ENCODE measurements at regions of chr3 and their contacts with region 1.

Region 1: GRCh38 chr3:53773611-53774368 is 72.4 kb downstream of the CHDH start:
- DNase-seq: peak in 1 of 2 donors; percentile 76
- H3K4me3 ChIP-seq: no peak overlapping the region
- H3K27ac ChIP-seq: peak overlapping the region in 1 of 2 donors; percentile 28
- H3K4me1 ChIP-seq: peaks cover 3 to 23% of the 10 kb centered on the region in 2 donors
- H3K27me3 ChIP-seq: no peaks in the 10 kb centered on the region
- CTCF ChIP-seq: no peak

Region 2: DNA sequence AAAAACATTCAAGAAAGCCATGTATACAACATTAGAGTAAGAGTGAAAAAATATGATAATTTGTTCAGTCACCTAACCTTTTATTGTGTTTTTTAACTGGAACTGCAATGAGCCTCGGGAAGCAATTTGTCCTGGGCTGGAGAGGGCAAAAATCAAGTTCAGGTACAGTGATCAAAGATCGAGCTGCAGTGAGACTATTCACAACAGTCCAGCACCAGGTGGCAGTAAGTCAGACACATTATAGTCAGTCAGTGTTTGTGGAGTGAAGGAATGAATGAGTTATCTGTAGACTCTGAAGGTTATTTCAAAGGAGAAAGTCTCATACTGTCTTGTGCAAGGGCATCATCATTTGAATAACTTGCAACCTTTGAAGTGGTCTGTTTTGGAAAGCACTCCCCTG is 44.2 kb before region 1 on chr3:
- intact Hi-C with region 1: no loop called
- DNase-seq: no peak
- H3K4me3 ChIP-seq: no peak overlapping the region
- H3K27ac ChIP-seq: no peak overlapping the region
- H3K4me1 ChIP-seq: peaks cover 0 to 6% of the 10 kb centered on the region in 2 donors
- H3K27me3 ChIP-seq: no peaks in the 10 kb centered on the region
- CTCF ChIP-seq: no peak

Region 3: DNA sequence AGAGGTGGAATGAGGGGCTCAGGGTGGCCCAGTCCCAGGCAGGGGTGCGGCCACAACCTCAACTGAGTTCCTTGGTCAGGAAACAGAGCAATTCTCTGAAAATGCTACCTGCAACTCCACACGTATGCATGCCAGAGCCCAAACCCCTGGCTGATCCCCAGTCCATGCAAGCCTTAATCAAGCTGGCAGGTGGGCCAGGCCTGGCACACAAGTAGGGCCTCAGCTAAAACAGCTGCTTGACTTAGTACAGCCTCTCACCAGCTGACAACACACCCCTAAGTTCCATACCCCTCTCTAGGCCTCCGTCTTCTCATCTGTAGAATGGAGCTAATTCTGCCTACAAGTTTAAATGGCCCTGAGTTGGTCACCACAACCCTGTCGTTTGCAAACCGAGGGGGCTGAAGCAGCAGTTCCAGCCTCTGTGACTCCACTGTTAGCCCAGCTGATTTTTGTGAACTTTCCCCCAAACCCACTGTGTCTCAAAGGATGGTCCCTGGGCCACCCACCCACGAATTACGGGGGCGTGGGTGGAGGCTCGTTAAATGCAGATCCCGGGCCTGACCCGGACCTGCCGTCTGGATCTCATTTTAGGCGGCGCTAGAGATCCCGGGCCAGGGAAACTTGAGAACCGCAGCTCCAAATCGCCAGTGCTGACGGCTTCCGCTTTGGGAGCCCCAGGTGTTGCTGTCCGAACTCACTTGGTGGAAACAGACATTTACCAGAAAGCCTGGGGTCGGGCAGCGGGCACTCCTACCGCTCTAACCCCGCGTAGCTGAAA is 71.5 kb after region 1 on chr3:
- intact Hi-C with region 1: loop called (anchors 5 kb)
- DNase-seq: peak in 1 of 2 donors; percentile 74
- H3K4me3 ChIP-seq: peak overlapping the region; percentile 66 to 83
- H3K27ac ChIP-seq: peak overlapping the region; percentile 34 to 63
- H3K4me1 ChIP-seq: peaks cover 3 to 5% of the 10 kb centered on the region in 2 donors
- H3K27me3 ChIP-seq: no peaks in the 10 kb centered on the region
- CTCF ChIP-seq: peak in 2 of 3 experiments; percentile 34 to 41